ENCODE measurements at regions of chr1 and their contacts with region 1.

Region 1: GRCh38 chr1:185426848-185427247 is 109.8 kb upstream of the IVNS1ABP start:
- DNase-seq: peak; percentile 92
- H3K4me3 ChIP-seq: no peak overlapping the region
- H3K27ac ChIP-seq: peak overlapping the region; percentile 87
- H3K4me1 ChIP-seq: peaks cover 18% of the 10 kb centered on the region
- H3K27me3 ChIP-seq: no peaks in the 10 kb centered on the region
- CTCF ChIP-seq: no peak
- POLR2A ChIP-seq: no peak

Region 2: DNA sequence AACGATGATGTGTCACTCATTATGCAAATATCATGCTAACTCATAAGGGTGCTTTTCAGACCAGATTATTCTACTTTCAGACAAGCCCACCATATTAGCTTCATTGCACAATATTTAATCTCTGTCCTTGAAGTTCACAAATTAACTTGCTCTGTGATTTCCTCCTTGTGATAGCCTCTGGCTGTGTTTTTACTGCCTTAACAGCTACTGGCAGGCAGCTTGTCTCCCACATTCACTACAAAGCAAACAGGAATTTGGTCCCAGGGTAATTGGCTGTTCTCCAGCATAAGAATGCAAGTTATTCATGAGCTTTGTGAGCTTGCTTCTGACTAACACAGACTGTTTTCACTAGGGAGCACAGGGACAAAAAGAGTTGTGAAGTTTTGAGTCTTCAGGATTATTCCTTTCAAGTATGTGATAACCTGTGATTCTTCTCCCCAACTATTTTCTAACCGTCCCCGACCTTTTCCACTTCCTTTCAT is 219.4 kb after region 1 on chr1:
- CTCF ChIA-PET with region 1: interaction called, 3 read pairs
- POLR2A ChIA-PET with region 1: no interaction called
- dilution Hi-C with region 1: no loop called
- intact Hi-C with region 1: loop called (anchors 2 kb)
- DNase-seq: peak; percentile 99
- H3K4me3 ChIP-seq: peak overlapping the region in 1 of 3 experiments; percentile 27
- H3K27ac ChIP-seq: peak overlapping the region; percentile 72
- H3K4me1 ChIP-seq: peaks cover 23% of the 10 kb centered on the region
- H3K27me3 ChIP-seq: no peaks in the 10 kb centered on the region
- CTCF ChIP-seq: no peak
- POLR2A ChIP-seq: no peak

Region 3: DNA sequence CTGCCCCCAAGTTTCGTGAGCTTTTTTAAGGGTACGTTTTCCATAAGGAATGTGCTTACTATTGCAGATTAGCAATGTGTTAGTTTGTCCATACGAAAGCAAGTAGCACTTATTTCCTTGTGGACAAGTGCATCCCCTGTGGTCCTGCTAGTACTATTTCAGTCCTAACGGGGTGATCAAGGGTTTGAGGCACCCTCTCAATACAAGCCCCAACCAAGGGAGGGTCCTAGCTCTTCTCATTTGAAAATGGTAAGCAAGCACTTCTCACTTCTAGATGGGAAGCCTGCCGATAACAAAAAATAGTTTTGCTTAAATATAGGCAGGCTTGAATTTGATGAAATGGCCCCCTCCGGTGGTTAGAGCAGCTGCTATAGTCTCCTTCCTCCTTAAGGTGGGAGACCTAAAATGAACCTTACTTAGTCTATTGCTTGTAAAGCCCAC is 243.4 kb after region 1 on chr1:
- CTCF ChIA-PET with region 1: interaction called, 13 read pairs
- POLR2A ChIA-PET with region 1: no interaction called
- dilution Hi-C with region 1: no loop called
- intact Hi-C with region 1: loop called (anchors 1 kb)
- DNase-seq: peak; percentile 74
- H3K4me3 ChIP-seq: no peak overlapping the region
- H3K27ac ChIP-seq: no peak overlapping the region
- H3K4me1 ChIP-seq: peaks cover 17% of the 10 kb centered on the region
- H3K27me3 ChIP-seq: no peaks in the 10 kb centered on the region
- CTCF ChIP-seq: peak; percentile 44 to 57
- POLR2A ChIP-seq: no peak